ENCODE measurements at regions of chr3 and their contacts with region 1.

Region 1: DNA sequence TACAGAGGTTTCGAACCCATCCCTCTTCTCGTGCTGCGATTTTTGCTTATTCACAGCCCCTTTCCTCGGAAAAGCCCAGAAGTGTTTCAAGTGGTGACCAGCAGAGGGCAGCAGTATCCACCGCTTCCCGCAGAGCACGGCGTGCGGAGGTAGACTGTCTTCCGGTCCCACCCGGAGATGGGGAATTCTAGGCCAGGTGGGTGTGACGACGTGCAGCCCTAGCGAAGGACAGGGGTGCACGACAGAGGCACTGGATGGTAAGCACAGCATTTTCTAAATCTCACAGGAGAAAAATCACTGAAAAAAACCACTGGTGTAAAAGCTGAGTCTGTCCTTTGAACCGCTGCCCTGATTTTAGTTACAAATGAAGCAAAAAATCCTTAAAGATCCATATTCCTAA is 7.4 kb upstream of the PSMD6 start:
- DNase-seq: peak; percentile 83
- ATAC-seq: peak; percentile 99
- H3K4me3 Mint-ChIP-seq: peak overlapping the region; percentile 61
- H3K27ac Mint-ChIP-seq: peak overlapping the region; percentile 76
- H3K4me1 Mint-ChIP-seq: peaks cover 6% of the 10 kb centered on the region
- H3K27me3 Mint-ChIP-seq: peaks cover 21% of the 10 kb centered on the region
- CTCF ChIP-seq: peak; percentile 83

Region 2: DNA sequence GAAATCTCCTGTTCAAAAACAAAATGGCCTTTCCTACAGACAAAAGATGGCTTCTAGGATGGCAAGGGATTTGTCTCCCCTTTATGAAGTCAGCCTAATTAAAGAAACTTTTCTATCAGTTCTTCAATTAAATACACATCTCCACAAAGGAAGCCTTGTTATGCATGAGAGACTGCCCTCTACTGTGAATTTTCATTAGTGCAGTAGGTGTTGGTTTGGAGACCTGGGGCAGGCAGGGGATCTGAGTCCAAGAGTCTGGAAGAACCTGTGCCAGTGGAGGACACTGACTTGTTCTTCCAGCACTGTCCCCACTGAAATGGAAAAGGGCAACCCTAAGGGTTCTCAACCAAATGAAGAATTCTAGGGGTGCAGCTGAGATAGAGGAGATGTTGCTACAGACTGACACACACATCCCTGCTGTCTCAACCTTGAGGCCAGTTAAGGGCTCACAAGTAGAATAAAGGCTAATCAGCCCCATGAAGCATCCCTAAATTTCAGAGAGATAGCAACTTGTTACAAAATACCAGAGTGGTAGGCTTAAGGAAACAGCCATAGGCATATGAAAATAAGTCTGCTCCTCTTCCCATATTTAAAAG is 368.6 kb after region 1 on chr3:
- CTCF ChIA-PET with region 1: interaction called, 5 read pairs
- POLR2A ChIA-PET with region 1: no interaction called
- intact Hi-C with region 1: loop called (anchors 1 kb)
- DNase-seq: peak; percentile 22
- ATAC-seq: peak; percentile 58
- H3K4me3 Mint-ChIP-seq: no peak overlapping the region
- H3K27ac Mint-ChIP-seq: no peak overlapping the region
- H3K4me1 Mint-ChIP-seq: no peaks in the 10 kb centered on the region
- H3K27me3 Mint-ChIP-seq: no peaks in the 10 kb centered on the region
- CTCF ChIP-seq: peak; percentile 43

Region 3: DNA sequence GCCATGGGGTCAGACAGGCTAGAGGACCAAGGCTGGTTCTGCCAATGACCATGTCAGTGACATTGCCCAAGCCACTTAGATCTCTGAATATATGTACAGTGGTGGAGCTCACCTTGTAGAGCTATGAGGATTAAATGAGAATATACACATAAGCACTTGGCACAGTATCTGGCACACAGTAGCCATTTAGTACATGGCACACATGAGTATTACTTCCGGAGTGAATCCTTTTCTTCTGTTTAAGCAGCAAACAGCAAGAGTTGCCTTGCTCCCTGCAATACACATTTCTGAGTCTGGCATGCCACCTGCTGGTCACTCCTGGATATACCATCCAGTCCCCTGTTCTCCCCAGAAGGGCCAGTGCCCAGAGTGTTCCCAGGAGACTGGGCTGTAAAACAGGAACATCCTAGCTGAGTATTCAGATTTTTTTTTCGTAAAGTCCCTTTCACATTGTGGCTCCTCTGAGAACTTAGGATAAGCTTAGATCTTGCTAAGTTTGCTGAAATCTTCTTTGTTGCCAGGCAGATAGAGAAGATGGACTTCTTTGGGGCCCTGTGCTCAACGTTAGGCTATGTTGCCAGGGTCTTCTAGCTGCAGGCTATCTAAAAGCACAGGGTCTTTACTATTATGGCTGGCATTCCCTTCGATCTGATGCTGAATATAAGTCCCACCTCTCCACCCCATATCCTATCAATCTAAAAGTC is 453.7 kb after region 1 on chr3:
- CTCF ChIA-PET with region 1: interaction called, 59 read pairs
- POLR2A ChIA-PET with region 1: no interaction called
- intact Hi-C with region 1: loop called (anchors 1 kb)
- DNase-seq: peak; percentile 83
- ATAC-seq: peak; percentile 98
- H3K4me3 Mint-ChIP-seq: no peak overlapping the region
- H3K27ac Mint-ChIP-seq: no peak overlapping the region
- H3K4me1 Mint-ChIP-seq: no peaks in the 10 kb centered on the region
- H3K27me3 Mint-ChIP-seq: peaks cover 14% of the 10 kb centered on the region
- CTCF ChIP-seq: peak; percentile 72